Esophagus squamous epithelium (tissue), 5 donors: ENCODE measurements at regions of chr17 and their contacts with region 1.

Region 1: DNA sequence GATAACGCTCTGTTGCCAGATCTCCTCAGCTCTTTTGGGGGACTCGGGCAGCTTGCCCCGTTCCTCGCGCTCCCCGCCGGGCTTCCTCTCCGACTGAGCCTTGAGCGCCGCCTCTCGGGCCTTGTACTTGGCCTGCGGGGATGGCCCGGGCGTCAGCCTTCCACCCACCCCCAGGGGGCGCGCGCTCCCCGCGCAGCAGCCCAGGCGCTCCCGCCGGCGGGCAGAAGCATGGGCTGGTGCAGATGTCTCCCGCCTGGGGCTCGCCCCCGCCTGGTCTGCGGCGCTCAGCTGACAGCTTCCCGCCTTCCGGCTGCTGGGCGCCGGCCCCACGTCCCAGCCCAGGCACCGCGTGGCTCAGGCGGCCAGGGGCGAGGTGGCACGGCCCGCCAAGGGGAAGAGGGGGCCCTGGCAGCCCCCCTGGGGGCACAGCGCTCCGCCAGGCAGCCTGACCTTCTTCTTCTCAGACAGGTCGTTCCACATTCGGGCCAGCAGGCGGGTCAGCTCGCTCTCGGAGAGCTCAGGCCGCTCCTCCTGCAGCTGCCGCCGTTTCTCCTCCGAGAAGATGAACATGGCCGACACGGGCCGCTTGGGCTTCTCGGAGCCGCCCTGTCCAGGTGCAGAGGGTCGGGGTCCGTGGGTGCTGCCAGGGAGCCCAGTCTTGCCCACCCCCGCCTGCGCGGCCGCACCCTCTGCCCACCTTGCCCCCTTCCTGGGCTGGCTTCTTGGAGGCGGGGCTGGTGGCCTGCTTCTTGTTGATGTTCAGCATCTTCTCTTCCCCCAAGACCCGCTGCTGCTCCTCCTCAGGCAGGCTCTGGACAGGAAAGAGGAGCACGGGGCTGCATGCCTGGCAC is 8.9 kb downstream of the UBTF start:
- DNase-seq: peak; percentile 35
- H3K4me3 ChIP-seq: peak overlapping the region in 2 of 4 donors; percentile 13 to 46
- H3K27ac ChIP-seq: peak overlapping the region; percentile 44 to 74 (median 68)
- H3K4me1 ChIP-seq: peaks cover 8 to 51% (median 19%) of the 10 kb centered on the region in 3 donors
- H3K27me3 ChIP-seq: no peaks in the 10 kb centered on the region
- CTCF ChIP-seq: peak; percentile 97 to 100 (median 99)
- POLR2A ChIP-seq: peak in 1 of 4 donors; percentile 26

Region 2: GRCh38 chr17:44324571-44325275 is 114.2 kb after region 1 on chr17 and contains the start of gene SLC25A39:
- intact Hi-C with region 1: loop called (anchors 5 kb)
- DNase-seq: peak; percentile 66
- H3K4me3 ChIP-seq: peak within 1 kb of the TSS; percentile 77 to 90 (median 88)
- H3K27ac ChIP-seq: peak within 1 kb of the TSS; percentile 88 to 94 (median 94)
- H3K4me1 ChIP-seq: peaks cover 23 to 56% (median 26%) of the 10 kb centered on the region in 3 donors
- H3K27me3 ChIP-seq: no peaks in the 10 kb centered on the region
- CTCF ChIP-seq: peak in 1 of 6 experiments; percentile 42
- POLR2A ChIP-seq: peak in 3 of 4 donors; percentile 66 to 83 (median 69)
- total RNA-seq, gene SLC25A39: 93.2 to 148 (median 107) TPM